Calu3 (cell line): ENCODE measurements at regions of chr12 and their contacts with region 1.

Region 1: DNA sequence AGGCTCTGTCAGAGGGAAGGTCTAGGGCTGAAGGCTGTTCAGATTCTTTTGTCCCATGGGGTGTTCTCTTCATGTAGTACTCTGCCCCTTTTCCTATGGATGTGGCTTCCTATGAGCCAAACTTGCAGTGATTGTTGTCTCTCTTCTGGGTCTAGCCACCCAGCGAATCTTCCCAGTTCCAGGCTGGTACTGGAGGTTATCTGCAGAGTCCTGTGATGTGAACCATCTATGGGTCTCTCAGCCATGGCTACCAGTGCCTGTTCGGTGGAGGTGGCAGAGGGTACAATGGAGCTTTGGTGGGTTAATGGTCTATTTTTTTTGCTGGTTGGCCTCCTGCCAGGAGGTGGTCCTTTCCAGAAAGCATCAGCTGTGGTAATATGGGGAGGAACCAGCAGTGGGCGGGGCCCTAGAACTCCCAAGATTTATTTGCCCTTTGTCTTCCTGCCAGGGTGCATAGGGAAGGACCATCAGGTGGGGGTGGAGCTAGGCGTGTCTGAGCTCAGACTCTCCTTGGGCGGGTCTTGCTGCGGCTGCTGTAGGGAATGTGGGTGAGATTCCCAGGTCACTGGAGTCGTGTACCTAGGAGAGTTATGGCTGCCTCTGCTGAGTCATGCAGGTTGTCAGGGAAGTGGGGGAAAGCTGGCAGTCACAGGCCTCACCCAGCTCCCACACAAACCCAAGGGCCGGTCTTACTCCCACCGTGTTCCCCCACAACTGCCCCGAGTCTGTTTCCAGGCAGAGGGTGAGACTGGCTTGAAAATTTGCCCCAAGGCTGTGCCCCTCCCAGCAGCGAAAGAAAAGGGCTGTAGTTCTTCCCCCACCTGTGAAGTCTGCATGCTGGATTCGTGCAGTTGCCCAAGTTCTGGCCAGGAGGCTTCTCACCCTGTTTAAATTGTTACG is 17.5 kb downstream of the MTRFR start:
- DNase-seq: peak; percentile 92
- H3K4me3 Mint-ChIP-seq: peak overlapping the region; percentile 56
- H3K27ac Mint-ChIP-seq: peak overlapping the region; percentile 97
- H3K4me1 Mint-ChIP-seq: peaks cover 25% of the 10 kb centered on the region
- H3K27me3 Mint-ChIP-seq: no peaks in the 10 kb centered on the region
- CTCF ChIP-seq: no peak

Region 2: DNA sequence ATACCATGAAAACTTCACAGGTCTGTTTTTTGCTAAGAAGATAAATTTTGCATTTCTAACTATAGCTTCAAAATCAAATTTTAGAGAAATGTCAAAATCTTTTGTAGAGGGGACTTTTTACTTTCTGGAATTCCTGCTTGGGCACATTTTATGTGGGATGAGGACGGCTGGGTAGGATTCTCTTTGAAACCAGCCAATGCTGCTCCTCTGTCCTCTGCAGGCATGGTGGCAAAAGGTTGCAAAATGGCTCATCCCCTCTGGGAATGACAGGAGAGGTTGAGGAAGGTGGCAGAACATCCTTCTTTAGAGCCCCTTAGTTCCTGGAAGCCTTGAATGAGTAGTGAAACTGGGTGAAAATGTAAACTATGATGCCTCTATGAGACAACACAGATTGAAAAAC is 483.0 kb before region 1 on chr12:
- CTCF ChIA-PET with region 1: no interaction called
- intact Hi-C with region 1: no loop called
- DNase-seq: no peak
- H3K4me3 Mint-ChIP-seq: no peak overlapping the region
- H3K27ac Mint-ChIP-seq: no peak overlapping the region
- H3K4me1 Mint-ChIP-seq: no peaks in the 10 kb centered on the region
- H3K27me3 Mint-ChIP-seq: no peaks in the 10 kb centered on the region
- CTCF ChIP-seq: no peak

Region 3: DNA sequence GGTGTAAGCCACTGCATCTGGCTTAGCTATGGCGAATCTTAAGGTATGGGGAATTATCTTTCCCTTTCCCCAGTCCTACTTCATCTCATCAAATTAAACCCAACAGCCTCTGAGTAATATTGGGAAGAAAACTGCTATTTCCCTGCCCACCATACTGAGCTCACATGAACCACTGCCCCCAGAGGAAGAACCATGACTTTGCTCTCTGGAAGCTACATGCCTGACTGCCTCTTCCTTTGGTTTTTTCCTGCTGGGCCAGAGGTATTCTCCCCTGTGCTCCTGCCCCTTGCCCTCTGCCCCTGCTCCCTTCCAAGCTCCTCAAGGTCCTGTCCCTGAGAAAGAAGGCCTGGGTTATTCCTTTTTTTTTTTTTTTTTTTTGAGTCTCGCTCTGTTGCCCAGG is 170.6 kb after region 1 on chr12:
- CTCF ChIA-PET with region 1: interaction called, 10 read pairs
- intact Hi-C with region 1: no loop called
- DNase-seq: no peak
- H3K4me3 Mint-ChIP-seq: no peak overlapping the region
- H3K27ac Mint-ChIP-seq: no peak overlapping the region
- H3K4me1 Mint-ChIP-seq: no peaks in the 10 kb centered on the region
- H3K27me3 Mint-ChIP-seq: no peaks in the 10 kb centered on the region
- CTCF ChIP-seq: no peak